ENCODE measurements at regions of chr17 and their contacts with region 1.

Region 1: GRCh38 chr17:29293890-29294579 is at the start of gene NUFIP2:
- DNase-seq: peak; percentile 98 to 100 (median 100)
- H3K4me3 ChIP-seq: peak within 1 kb of the TSS; percentile 57 to 99 (median 91)
- H3K27ac ChIP-seq: peak within 1 kb of the TSS; percentile 91 to 100 (median 99)
- H3K27me3 ChIP-seq: no peaks in the 10 kb centered on the region
- CTCF ChIP-seq: peak in 47 of 56 donors; percentile 24 to 65 (median 47)
- total RNA-seq, gene NUFIP2: 42.4 to 96.8 (median 54.8) TPM

Region 2: GRCh38 chr17:29124117-29124924 is 169.7 kb before region 1 on chr17:
- intact Hi-C with region 1: loop called in 1 of 2 experiments (anchors 5 kb)
- DNase-seq: peak in 2 of 10 donors; percentile 55 to 68
- H3K4me3 ChIP-seq: no peak overlapping the region
- H3K27ac ChIP-seq: peak overlapping the region in 19 of 59 donors; percentile 5 to 75 (median 24)
- H3K27me3 ChIP-seq: no peaks in the 10 kb centered on the region
- CTCF ChIP-seq: peak; percentile 33 to 85 (median 70)

Region 3: GRCh38 chr17:29140051-29140621 is 153.9 kb before region 1 on chr17:
- intact Hi-C with region 1: no loop called
- DNase-seq: peak in 9 of 10 donors; percentile 63 to 92 (median 72)
- H3K4me3 ChIP-seq: peak overlapping the region in 57 of 59 donors; percentile 13 to 57 (median 38)
- H3K27ac ChIP-seq: peak overlapping the region in 58 of 59 donors; percentile 1 to 92 (median 82)
- H3K27me3 ChIP-seq: no peaks in the 10 kb centered on the region
- CTCF ChIP-seq: no peak

Region 4: GRCh38 chr17:29180034-29180787 is 113.8 kb before region 1 on chr17 and contains the start of gene MYO18A:
- intact Hi-C with region 1: loop called in 1 of 2 experiments (anchors 1 kb)
- DNase-seq: peak; percentile 55 to 89 (median 74)
- H3K4me3 ChIP-seq: peak within 1 kb of the TSS; percentile 55 to 91 (median 78)
- H3K27ac ChIP-seq: peak within 1 kb of the TSS; percentile 85 to 100 (median 98)
- H3K27me3 ChIP-seq: no peaks in the 10 kb centered on the region
- CTCF ChIP-seq: peak; percentile 37 to 94 (median 76)
- total RNA-seq, gene MYO18A: 93.9 to 275 (median 143) TPM

Region 5: DNA sequence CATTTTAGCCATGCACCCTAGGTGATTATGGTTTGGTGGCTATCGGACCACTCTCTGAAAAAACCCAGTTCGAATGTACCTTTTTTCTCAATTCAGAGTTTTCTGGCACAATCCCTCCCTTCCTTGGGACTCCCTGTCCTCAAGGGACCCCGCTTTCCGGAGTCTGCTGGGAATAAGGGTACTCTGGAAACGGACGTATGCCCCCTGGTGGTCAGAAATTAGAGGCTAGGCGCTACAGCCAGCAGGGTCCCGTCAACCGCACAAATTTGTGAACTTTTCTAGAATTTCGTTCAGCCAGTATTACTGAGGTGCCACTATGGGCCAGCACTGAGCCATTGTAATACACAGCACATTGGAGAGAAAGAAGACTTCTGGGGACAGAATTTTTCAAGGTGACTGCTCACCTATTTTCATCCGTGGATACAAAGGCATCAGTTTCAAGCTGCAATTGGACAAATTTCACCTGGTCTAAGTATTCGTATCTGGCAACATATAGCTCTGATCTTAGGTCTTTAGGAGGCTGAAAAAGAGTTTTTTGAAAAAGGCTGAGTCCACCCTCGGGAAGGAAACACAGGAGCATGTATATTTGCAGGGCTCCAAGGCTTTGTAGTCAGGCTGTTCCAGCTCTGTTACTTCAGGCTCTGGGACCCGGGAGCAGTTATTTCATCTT is 74.5 kb before region 1 on chr17:
- intact Hi-C with region 1: loop called (anchors 2 to 5 kb)
- DNase-seq: peak; percentile 67 to 90 (median 85)
- H3K4me3 ChIP-seq: peak overlapping the region in 15 of 59 donors; percentile 0 to 35 (median 19)
- H3K27ac ChIP-seq: peak overlapping the region in 24 of 59 donors; percentile 4 to 73 (median 32)
- H3K27me3 ChIP-seq: no peaks in the 10 kb centered on the region
- CTCF ChIP-seq: peak; percentile 93 to 99 (median 98)

Region 6: GRCh38 chr17:29363716-29364115 is 69.7 kb after region 1 on chr17:
- intact Hi-C with region 1: loop called in 1 of 2 experiments (anchors 5 kb)
- DNase-seq: no peak
- H3K4me3 ChIP-seq: no peak overlapping the region
- H3K27ac ChIP-seq: no peak overlapping the region
- H3K27me3 ChIP-seq: no peaks in the 10 kb centered on the region
- CTCF ChIP-seq: no peak

Region 7: DNA sequence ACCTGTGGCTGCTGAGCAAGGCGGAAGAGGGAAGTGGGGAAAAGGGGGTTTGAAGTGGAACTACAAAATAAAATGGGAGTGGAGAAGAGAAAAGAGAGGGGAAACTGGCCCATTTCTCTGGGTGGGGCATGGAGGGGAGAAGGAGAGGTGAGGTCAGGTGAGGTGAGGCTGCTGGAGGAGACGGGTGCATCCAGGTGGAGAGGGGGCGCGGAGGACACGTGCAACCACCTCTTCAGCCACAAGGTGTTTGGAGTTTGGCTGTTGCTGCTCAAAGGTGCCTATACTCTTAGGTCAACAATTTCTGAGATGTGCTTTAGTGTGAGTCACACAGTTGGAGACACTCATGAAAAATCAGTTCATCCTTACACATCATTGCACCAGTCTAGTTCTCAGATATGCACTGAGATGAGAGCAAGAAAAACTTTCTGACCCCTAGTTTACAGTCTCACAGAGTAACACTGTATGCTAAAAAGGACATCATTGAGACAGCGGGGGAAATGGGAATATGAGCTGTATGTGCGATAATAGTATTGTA is 936.6 kb after region 1 on chr17:
- intact Hi-C with region 1: no loop called
- DNase-seq: no peak
- H3K4me3 ChIP-seq: no peak overlapping the region
- H3K27ac ChIP-seq: no peak overlapping the region
- H3K27me3 ChIP-seq: peaks cover 0 to 13% (median under 1%) of the 10 kb centered on the region in 45 donors
- CTCF ChIP-seq: no peak

Measured in dorsolateral prefrontal cortex (tissue), 120 donors.